GM10248 (cell line): ENCODE measurements at regions of chr13 and their contacts with region 1.

Region 1: GRCh38 chr13:52128714-52129700 is at the start of gene NEK5:
- DNase-seq: peak; percentile 78
- CTCF ChIP-seq: peak; percentile 52

Region 2: DNA sequence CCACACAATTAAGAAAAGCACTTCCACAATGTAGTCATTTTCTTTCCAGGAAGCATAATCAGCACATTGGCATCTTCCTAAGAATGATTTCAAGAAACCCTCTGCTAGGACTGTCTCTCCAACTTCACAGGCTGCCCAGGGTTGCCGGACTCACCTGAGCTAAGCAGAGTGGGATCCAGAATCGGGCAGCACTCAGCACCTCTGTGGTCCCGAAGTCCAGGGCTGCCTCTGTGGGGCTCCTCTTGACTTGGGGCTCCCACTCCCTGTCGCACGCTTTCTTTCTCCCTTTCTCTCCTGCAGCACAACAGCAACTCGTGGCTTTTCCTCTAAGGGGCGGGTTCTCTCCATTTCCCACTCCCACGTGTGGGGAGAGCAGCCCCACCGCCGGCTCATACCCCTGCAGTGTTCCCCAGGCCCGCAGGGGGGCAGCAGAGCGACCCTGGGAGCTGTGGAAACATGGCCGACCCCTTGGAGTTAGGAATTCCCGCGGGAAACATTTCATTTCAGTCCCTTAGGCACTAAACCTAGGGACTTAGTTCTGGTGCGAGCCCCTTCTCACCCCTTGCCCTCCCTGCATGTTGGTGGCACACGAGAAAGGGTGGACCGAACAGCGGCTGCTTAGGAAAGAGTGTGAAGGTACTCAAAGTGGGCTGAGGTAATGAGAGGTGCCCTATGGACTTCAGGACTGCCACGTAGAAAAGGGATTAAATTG is 284.0 kb before region 1 on chr13 and contains the start of gene TMEM272:
- CTCF ChIA-PET with region 1: interaction called, 13 read pairs
- POLR2A ChIA-PET with region 1: no interaction called
- DNase-seq: peak; percentile 77
- CTCF ChIP-seq: peak; percentile 77

Region 3: DNA sequence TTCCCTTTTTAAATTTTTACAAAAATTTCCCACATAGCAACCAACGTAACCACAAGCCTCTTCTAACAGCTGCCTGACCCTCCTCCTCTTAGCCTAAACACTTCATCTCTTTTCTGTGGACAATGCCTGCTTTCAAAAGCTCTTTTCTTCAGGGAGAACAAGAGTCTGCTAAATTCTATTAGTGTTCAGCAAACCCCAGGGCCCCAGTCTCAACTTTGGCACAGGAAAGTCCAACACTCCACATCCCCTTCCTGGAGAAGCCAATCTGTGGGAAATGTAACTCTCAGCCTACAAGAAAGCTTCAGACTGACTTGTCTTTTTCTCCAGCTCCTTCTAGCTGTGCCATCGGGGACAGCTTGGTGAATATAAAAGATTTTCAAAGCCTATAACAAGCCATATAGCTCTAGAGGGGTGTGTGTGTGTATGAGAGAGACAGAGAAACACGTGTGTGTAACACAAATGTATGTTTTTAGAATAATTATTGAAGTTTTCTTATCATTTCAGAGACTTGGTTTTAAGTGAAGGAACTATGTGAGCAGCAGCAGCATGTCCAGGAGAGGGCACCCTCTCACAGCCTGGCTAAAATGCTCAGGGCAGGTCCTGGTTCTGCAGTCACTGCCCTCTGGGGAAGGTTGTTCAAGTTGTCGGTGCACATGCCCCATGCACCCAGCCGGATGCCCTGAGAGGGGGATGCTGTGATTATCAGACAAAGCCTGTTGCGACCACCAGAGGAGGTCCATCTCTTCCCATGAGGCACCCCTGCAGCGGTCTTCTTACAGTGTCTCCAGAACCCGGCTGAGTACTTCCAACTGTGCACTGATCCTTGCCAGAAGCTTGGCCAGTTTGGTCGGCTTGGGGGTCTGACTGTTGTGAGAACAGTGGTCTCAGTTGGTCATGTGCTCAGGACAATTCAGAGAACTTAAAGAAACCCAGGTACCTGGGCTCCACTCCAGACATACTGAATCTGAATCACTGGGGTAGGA is 232.8 kb before region 1 on chr13:
- CTCF ChIA-PET with region 1: interaction called, 25 read pairs
- POLR2A ChIA-PET with region 1: no interaction called
- DNase-seq: peak; percentile 69
- CTCF ChIP-seq: peak; percentile 75

Region 4: DNA sequence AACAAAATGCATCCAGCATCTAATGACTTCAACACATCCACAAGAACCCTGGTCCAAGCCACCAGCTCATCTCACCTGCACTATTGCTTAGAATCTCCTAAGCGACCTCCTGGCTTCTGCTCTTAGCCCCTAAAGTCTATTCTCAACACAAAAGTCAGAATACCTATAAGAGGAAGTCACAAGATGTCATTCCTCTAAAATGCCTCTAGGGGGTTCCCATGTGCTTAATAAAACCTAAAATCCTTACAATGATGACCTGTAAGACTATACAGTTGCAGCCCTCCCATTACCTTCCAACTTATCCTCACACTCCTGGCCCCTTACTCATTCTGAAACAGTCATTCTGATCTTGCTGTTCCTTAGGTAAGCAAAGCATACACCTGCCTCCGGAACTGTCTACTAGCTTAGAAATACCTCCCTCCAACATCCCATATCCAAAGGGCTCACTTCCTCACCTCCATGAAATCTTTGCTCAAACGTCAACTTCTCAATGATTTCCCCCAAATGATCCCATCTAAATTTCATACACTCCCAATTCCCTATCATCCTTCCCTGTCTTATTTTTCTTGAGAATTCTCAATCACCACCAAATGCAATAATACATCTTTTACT is 127.8 kb before region 1 on chr13:
- CTCF ChIA-PET with region 1: interaction called, 18 read pairs
- POLR2A ChIA-PET with region 1: no interaction called
- DNase-seq: peak; percentile 76
- CTCF ChIP-seq: peak; percentile 47

Region 5: GRCh38 chr13:52104624-52105023 is 24.4 kb before region 1 on chr13:
- CTCF ChIA-PET with region 1: interaction called, 19 read pairs
- POLR2A ChIA-PET with region 1: no interaction called
- DNase-seq: no peak
- CTCF ChIP-seq: no peak

Region 6: DNA sequence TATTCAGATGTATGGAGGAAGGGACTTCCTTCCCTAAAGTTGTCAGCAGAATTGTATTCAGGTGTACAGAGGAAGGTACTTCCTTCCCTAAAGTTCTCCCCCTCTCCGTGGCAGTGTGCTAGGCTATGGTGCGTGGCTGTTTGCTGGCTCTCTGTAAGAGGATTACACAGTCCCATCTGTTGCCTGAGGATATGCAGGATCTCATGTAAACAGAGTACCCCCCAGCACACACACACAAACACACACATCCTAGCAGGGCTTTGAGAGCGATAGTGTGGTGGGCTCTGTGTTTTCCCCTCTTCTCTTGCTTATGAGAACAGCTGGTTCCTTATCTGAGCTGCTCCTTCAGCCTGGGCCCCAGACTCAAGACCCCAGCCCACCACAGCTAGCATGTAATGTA is 10.4 kb before region 1 on chr13:
- CTCF ChIA-PET with region 1: interaction called, 10 read pairs
- POLR2A ChIA-PET with region 1: no interaction called
- DNase-seq: no peak
- CTCF ChIP-seq: no peak

Region 7: DNA sequence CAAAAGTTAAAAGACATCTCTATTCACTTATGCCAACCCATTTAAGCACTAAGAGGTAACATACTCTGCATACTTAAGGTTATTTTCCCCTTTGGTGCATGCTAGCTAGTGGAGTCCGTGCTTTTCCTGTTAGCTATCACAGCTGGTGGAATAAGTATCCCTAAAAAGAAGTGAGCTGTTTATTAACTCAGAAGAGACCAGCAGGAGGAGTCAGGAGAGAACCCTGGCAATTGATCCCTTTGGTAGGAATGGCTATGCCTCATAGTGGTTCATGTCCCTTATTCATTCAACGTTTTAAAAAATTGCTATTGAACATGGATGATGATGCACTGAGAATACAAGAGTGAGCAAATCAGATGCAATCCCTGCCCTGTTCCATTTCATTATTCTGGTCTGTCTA is 12.3 kb after region 1 on chr13:
- CTCF ChIA-PET with region 1: interaction called, 18 read pairs
- POLR2A ChIA-PET with region 1: no interaction called
- DNase-seq: no peak
- CTCF ChIP-seq: no peak